Dendritic cell treated with granulocyte-macrophage colony-stimulating factor and Interleukin-4, amounts not matched to agents 40 ng/mL and 50 ng/mL, for 4 days (primary cell): ENCODE measurements at regions of chr10 and their contacts with region 1.

Region 1: DNA sequence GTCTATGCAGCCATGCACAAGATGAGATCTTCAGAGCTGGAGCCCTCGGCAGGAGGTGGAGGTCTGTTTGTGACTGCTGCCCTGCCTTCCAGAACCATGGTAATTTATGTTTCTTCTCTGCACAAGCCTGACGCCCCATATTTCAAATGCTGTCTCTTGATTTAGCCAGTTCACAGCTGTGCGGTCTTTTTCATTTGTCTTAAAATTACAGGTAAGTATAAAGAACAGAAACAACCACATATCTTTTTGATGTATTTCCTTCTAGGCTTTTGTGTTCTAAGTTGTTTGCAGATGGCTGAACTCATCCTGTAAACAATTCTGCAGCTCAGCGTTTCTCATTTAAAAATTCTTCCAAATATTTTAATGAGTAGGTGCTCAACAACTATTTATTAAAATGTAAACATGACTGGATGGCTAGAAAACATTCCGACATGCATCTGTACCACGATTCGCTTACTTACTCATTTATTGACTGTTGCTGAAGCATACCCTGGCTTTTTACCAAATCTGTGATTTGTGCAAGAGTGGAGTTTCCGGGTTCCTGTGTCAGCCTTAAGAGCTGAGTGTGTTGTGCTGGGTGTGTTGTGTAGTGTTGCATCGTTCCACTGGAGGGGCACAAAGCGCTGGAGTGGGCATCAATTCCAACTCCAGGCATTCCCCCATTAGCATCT is 58.9 kb downstream of the PIP4K2A start:
- H3K4me3 Mint-ChIP-seq: no peak overlapping the region
- H3K27ac Mint-ChIP-seq: no peak overlapping the region
- H3K4me1 Mint-ChIP-seq: peaks cover 82% of the 10 kb centered on the region
- H3K27me3 Mint-ChIP-seq: no peaks in the 10 kb centered on the region

Region 2: DNA sequence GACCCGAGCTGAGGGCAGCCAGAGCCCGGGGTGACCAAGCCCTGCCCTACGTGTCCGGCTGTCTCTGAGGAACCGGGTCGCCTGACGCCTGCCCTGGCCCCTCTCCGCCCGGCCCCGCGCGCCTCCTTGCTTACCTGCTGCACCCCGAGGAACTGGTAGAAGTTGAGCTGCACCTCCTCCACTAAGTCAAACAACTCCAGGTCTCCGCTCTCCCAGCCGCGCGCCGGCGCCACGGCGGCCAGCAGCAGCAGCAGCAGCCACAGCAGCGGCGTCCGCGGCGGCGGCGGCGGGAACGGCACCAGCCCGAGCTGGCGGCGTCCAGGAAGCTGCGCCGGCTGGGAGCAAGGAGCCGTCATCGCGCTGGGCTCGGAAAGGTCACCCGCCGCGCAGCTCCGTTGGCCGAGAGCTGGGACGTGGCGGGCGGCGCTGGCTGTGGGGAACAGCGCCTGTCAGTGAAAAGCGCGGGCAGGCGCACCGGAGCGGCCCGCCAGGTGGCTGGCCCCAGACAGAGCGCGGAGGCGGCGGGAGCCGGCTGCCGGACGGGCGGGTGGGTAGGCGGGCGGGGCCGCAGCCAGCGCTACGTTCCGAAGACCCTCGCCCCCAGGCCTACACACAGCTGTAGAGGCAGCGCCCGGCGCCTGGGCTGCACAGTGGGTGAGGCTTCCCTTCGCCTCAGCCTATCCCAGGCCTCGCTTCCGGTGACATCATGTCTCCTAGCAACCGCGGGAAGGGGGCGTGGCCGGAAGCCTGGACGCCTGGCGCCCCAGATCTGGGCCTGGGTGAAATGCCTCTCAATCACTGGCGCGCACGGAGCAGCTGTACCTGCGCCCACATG is 652.1 kb before region 1 on chr10 and contains the start of gene DNAJC1:
- intact Hi-C with region 1: no loop called
- H3K4me3 Mint-ChIP-seq: peak within 1 kb of the TSS; percentile 90
- H3K27ac Mint-ChIP-seq: peak within 1 kb of the TSS; percentile 87
- H3K4me1 Mint-ChIP-seq: peaks cover 23% of the 10 kb centered on the region
- H3K27me3 Mint-ChIP-seq: no peaks in the 10 kb centered on the region

Region 3: DNA sequence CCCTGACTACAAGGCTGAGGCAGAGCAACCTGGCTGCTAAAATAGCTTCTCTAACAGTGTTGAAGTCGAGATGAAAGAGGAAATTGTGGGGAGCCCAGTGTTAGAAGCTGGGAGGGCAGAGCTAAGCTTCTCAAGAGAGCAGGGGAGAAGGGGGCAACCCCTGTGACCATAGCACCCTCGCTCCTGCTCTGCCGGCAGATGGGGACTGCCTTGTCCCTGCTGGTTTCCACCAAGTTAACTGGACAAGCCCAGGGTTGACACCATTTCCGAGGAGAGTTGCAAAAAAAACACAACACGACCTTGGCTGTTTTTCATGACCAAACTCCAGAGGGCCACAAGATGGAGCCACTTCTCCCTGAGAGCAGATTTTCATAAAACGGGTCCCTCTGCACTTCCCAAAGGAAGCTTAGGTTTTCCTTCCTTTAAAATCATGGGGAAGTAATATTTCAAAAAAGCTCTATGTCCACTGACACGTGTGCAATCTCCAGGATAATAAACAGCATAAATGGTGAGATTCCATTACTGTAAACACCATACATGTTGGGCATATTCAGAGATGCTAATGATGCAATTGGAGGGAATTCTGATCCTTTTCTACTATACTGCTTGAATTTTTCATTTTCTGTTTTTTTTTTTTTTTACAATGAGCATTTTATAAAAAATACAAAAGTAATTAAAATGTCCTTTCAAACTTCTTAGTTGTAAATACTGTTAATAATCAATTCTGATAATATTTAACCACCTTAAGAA is 81.5 kb before region 1 on chr10:
- intact Hi-C with region 1: no loop called
- H3K4me3 Mint-ChIP-seq: no peak overlapping the region
- H3K27ac Mint-ChIP-seq: no peak overlapping the region
- H3K4me1 Mint-ChIP-seq: peaks cover 11% of the 10 kb centered on the region
- H3K27me3 Mint-ChIP-seq: no peaks in the 10 kb centered on the region

Region 4: DNA sequence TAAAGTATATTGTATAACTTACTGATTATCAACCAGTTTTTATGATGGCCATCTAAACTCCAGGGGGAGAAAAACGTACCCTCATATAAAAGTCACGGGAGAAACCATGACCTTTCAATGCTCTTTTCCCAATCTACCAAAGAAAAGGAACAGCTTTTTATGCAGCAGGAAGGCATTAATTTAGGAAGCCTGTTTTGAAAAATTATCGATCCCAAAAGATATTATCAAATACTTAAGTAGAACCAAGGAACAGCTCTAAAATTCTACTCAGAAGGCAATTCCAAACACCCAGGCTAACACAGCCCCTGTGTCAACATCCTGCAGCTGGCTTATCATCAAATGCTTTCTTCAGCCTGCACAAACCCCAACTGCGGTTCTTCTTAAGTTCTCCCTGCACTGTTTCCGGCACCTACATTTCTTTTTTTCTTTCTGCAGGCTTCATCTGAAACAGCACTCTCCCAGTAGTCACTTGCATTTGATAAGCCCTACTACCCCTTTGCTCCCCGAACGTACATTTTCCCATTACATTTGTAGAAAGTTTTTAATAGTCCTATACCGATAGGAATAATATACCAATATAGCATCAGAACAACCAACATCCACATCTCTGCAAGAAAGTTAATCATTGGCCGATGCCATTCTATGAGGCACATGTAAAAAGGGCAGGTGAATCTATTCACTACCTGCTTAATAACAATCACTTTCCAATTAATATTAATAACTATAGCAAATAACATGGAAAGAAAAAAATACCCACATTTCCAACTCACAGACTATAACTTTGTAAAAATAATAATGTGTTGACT is 11.0 kb after region 1 on chr10:
- intact Hi-C with region 1: no loop called
- H3K4me3 Mint-ChIP-seq: peak overlapping the region; percentile 0
- H3K27ac Mint-ChIP-seq: no peak overlapping the region
- H3K4me1 Mint-ChIP-seq: peaks cover 37% of the 10 kb centered on the region
- H3K27me3 Mint-ChIP-seq: no peaks in the 10 kb centered on the region

Region 5: DNA sequence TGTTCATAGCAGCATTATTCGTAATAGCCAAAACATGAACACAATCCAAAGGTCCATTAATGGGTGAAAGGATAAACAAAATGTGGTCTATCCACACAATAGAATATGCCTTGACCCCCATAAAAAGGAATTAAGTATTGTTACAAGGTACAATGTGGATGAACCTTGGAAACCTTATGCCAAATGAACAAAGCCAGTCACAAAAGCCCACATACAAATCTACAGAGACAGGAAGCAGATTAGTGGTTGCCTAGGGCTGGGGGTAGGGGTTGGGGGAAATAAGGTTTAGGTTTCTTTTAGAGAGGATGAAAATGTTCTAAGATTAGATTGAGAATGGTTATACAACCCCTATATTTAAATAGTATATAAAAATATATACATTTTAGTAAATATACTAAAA is 24.2 kb after region 1 on chr10:
- intact Hi-C with region 1: loop called (anchors 1 kb)
- H3K4me3 Mint-ChIP-seq: no peak overlapping the region
- H3K27ac Mint-ChIP-seq: no peak overlapping the region
- H3K4me1 Mint-ChIP-seq: peaks cover 61% of the 10 kb centered on the region
- H3K27me3 Mint-ChIP-seq: no peaks in the 10 kb centered on the region

Region 6: DNA sequence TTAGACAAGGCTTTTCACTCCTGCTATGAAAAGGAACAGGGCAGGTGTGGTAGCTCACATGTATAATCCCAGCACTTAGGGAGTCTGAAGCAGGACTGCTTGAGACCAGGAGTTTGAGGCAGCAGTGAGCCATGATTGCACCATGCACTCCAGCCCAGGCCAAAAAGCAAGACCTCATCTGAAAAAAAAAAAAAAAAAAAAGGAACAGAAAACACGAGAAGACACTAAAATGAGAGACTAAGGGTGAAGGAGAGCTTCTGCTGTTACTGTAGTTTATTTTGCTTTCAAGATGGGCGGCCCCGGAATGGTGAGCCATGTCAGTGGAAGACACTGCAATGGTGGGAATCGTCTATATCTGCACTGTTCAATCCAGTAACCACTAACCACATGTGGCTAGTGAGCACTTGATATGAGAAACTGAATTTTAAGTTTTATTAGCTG is 49.0 kb after region 1 on chr10:
- intact Hi-C with region 1: loop called (anchors 10 kb)
- H3K4me3 Mint-ChIP-seq: peak overlapping the region; percentile 27
- H3K27ac Mint-ChIP-seq: peak overlapping the region; percentile 89
- H3K4me1 Mint-ChIP-seq: peaks cover 84% of the 10 kb centered on the region
- H3K27me3 Mint-ChIP-seq: no peaks in the 10 kb centered on the region